Panc1 (cell line): ENCODE measurements at regions of chr19 and their contacts with region 1.

Region 1: DNA sequence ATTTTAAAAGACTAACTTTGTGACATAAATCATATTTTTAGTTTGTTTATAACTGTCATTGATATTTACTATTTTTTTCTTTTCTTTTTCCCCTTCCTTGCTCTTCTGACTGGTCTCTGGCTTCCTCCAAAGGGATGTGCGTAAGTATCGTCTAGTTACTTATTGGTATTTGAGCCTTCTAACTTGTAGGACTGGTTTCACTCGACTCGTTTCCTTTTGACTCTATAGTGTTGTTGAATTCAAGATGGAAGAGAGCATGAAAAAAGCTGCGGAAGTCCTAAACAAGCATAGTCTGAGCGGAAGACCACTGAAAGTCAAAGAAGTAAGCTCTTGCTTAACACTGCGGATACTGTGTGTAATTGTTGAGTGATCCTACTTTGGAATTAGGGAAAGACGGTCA is 18.6 kb downstream of the HNRNPM start:
- DNase-seq: no peak
- ATAC-seq: no peak
- H3K4me3 ChIP-seq: no peak overlapping the region
- H3K27ac ChIP-seq: no peak overlapping the region
- H3K4me1 ChIP-seq: peaks cover 42% of the 10 kb centered on the region
- H3K27me3 ChIP-seq: no peaks in the 10 kb centered on the region
- CTCF ChIP-seq: no peak

Region 2: GRCh38 chr19:8525401-8525684 is 62.0 kb after region 1 on chr19:
- CTCF ChIA-PET with region 1: no interaction called
- POLR2A ChIA-PET with region 1: interaction called, 11 read pairs
- in situ Hi-C with region 1: no loop called
- intact Hi-C with region 1: no loop called
- DNase-seq: no peak
- ATAC-seq: no peak
- H3K4me3 ChIP-seq: peak overlapping the region; percentile 48 to 68
- H3K27ac ChIP-seq: peak overlapping the region; percentile 85
- H3K4me1 ChIP-seq: 0 out of 2 replicates have a peak, but pooled peaks cover 3% of the 10 kb centered on the region
- H3K27me3 ChIP-seq: no peaks in the 10 kb centered on the region
- CTCF ChIP-seq: no peak

Region 3: GRCh38 chr19:8545743-8546142 is 82.4 kb after region 1 on chr19:
- CTCF ChIA-PET with region 1: no interaction called
- POLR2A ChIA-PET with region 1: interaction called, 20 read pairs
- in situ Hi-C with region 1: no loop called
- intact Hi-C with region 1: no loop called
- DNase-seq: no peak
- ATAC-seq: no peak
- H3K4me3 ChIP-seq: no peak overlapping the region
- H3K27ac ChIP-seq: no peak overlapping the region
- H3K4me1 ChIP-seq: no peaks in the 10 kb centered on the region
- H3K27me3 ChIP-seq: no peaks in the 10 kb centered on the region
- CTCF ChIP-seq: no peak